AG04449 (cell line): ENCODE measurements at regions of chr6 and their contacts with region 1.

Region 1: GRCh38 chr6:145929037-145929633 is 35.0 kb downstream of the SHPRH start:
- DNase-seq: no peak
- H3K4me3 ChIP-seq: no peak overlapping the region
- CTCF ChIP-seq: peak; percentile 32

Region 2: GRCh38 chr6:145147981-145148783 is 781.0 kb before region 1 on chr6:
- CTCF ChIA-PET with region 1: no interaction called
- POLR2A ChIA-PET with region 1: no interaction called
- DNase-seq: no peak
- H3K4me3 ChIP-seq: no peak overlapping the region
- CTCF ChIP-seq: no peak

Region 3: DNA sequence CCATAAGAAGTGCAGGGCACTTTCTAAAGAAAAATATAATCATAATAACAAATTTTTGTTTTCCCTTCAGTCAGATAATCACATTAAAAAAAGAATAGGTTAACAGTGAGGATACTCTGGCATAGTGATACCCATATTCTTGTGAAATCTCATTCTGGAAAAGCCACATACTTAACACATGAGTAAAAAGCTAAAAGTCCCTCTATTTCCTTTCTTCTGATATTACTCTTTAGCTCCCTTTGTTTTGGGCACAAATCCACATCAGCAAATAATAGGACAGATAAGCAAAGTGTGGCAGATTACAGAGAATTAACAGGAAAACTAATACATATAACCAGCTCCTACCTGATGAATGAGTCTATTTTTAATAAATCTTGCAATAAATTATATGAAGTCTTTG is 19.2 kb after region 1 on chr6:
- CTCF ChIA-PET with region 1: interaction called, 13 read pairs
- POLR2A ChIA-PET with region 1: no interaction called
- DNase-seq: no peak
- H3K4me3 ChIP-seq: no peak overlapping the region
- CTCF ChIP-seq: no peak

Region 4: DNA sequence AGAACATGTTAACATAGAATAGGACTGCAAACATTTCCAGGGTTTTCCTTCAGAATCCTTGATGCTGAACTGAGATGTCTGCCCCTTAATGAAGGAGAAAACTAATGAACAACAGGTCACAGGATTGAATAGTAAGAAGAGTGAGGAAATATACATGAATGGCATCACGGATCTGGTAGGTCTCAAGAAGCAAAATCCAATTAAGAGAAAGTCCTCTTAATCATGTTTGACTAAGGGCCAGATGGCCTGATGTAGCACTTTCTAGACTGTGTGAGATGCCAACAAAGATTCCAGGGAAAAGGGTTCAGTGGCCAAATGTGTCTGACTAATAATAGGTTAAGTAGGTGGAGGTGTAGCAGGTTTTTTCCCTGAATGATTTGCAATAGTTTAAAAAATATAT is 48.7 kb after region 1 on chr6:
- CTCF ChIA-PET with region 1: no interaction called
- POLR2A ChIA-PET with region 1: no interaction called
- DNase-seq: no peak
- H3K4me3 ChIP-seq: no peak overlapping the region
- CTCF ChIP-seq: no peak

Region 5: DNA sequence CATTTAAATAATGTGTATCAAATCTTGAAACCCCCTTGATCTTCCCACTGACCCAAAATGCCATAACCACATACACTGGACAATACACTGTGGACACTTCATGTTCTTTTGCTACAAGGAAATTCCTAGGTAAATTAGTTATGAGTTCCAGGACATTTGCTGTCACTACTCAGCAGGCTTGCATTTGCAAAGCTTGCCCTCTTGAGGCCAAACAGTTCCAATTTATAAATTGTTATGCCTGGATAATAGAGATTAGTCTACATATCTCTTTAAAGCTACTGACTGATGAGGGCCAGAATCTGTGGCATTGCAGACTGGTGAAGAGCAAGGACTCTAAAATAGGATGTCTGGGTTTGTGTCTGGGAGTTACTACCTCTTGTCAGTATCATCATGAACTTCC is 597.1 kb after region 1 on chr6:
- CTCF ChIA-PET with region 1: interaction called, 10 read pairs
- POLR2A ChIA-PET with region 1: no interaction called
- DNase-seq: no peak
- H3K4me3 ChIP-seq: no peak overlapping the region
- CTCF ChIP-seq: no peak

Region 6: DNA sequence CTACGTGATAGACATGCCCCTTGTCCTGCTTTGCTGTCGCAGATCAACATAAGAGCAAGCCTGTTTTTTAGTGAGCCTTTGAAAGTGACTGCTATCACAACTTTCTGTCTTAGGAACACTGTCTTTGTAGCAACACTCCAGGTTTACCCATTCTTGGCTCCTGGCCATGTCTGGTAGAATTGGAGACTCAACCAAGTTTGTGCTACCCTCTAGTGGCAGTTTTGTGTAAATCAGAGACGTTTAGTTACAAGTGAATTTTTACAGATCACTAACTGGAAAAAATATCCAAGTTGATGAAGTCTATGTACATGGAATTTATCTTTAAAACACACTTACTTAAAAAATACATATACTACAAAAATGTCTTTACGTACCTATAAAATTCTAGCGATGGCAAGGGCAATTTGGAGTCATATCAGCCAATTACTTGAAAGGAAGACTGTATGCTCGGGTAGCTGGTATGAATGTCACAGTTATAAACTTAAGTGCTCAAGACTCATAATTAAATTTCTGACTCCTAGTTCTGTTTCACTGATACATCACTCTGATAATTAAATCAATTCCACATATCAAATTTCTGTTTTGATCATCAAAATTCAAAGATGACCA is 771.0 kb after region 1 on chr6:
- CTCF ChIA-PET with region 1: interaction called, 49 read pairs
- POLR2A ChIA-PET with region 1: no interaction called
- DNase-seq: peak; percentile 47
- H3K4me3 ChIP-seq: no peak overlapping the region
- CTCF ChIP-seq: peak; percentile 54